Left lung (tissue), 14 donors: ENCODE measurements at regions of chr5 and their contacts with region 1.

Region 1: DNA sequence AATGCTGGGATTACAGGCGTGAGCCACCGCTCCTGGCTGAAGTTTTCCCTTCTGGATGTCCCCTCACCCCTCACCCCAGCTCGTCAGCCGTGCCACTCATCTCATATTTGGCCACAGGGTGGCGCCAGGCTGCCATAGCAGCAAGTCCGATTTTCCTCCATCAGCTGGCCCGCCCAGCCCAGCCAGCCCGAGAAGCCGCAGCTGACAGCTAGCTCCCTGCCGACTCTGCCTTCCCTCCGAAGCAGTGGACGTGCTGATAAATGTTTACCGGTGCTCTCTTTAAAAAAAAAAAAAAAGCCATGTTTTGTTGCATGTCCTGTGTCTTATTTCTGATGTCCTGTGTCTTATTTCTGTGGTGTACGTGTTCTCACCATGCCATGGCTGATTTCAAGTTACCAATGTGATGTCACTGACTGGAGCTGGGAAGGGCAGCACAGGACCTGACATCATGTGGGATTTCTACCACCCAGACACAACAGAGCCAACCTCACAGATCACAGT is 58.3 kb downstream of the PFDN1 start:
- DNase-seq: peak; percentile 60 to 97 (median 92)
- ATAC-seq: peak; percentile 79
- H3K4me3 ChIP-seq: no peak overlapping the region
- H3K27ac ChIP-seq: peak overlapping the region in 1 of 2 donors; percentile 66
- H3K4me1 ChIP-seq: peaks cover 30 to 59% of the 10 kb centered on the region in 2 donors
- H3K27me3 ChIP-seq: no peaks in the 10 kb centered on the region
- CTCF ChIP-seq: peak; percentile 83 to 85

Region 2: GRCh38 chr5:140302786-140303639 is 58.4 kb after region 1 on chr5 and contains the start of gene PFDN1:
- intact Hi-C with region 1: no loop called
- DNase-seq: peak; percentile 90 to 96 (median 94)
- ATAC-seq: peak; percentile 93
- H3K4me3 ChIP-seq: peak within 1 kb of the TSS; percentile 50 to 60
- H3K27ac ChIP-seq: peak within 1 kb of the TSS; percentile 70 to 75
- H3K4me1 ChIP-seq: peaks cover 7 to 47% of the 10 kb centered on the region in 2 donors
- H3K27me3 ChIP-seq: no peaks in the 10 kb centered on the region
- CTCF ChIP-seq: no peak
- polyA plus RNA-seq, gene PFDN1: 85.3 to 98.9 (median 91.6) TPM

Region 3: GRCh38 chr5:140346348-140347101 is 102.0 kb after region 1 on chr5 and contains the start of gene HBEGF:
- intact Hi-C with region 1: loop called (anchors 5 to 10 kb)
- DNase-seq: peak; percentile 76 to 98 (median 87)
- ATAC-seq: peak; percentile 86
- H3K4me3 ChIP-seq: peak within 1 kb of the TSS; percentile 75 to 97
- H3K27ac ChIP-seq: peak within 1 kb of the TSS; percentile 70 to 88
- H3K4me1 ChIP-seq: peaks cover 9 to 55% of the 10 kb centered on the region in 2 donors
- H3K27me3 ChIP-seq: no peaks in the 10 kb centered on the region
- CTCF ChIP-seq: peak; percentile 24 to 51
- polyA plus RNA-seq, gene HBEGF: 5.4 to 12.7 (median 7.6) TPM

Region 4: GRCh38 chr5:140351609-140352334 is 107.2 kb after region 1 on chr5:
- intact Hi-C with region 1: loop called (anchors 5 to 10 kb)
- DNase-seq: peak in 2 of 4 donors; percentile 54 to 79
- ATAC-seq: peak; percentile 76
- H3K4me3 ChIP-seq: no peak overlapping the region
- H3K27ac ChIP-seq: no peak overlapping the region
- H3K4me1 ChIP-seq: peaks cover 0 to 11% of the 10 kb centered on the region in 2 donors
- H3K27me3 ChIP-seq: no peaks in the 10 kb centered on the region
- CTCF ChIP-seq: peak; percentile 77 to 98

Region 5: DNA sequence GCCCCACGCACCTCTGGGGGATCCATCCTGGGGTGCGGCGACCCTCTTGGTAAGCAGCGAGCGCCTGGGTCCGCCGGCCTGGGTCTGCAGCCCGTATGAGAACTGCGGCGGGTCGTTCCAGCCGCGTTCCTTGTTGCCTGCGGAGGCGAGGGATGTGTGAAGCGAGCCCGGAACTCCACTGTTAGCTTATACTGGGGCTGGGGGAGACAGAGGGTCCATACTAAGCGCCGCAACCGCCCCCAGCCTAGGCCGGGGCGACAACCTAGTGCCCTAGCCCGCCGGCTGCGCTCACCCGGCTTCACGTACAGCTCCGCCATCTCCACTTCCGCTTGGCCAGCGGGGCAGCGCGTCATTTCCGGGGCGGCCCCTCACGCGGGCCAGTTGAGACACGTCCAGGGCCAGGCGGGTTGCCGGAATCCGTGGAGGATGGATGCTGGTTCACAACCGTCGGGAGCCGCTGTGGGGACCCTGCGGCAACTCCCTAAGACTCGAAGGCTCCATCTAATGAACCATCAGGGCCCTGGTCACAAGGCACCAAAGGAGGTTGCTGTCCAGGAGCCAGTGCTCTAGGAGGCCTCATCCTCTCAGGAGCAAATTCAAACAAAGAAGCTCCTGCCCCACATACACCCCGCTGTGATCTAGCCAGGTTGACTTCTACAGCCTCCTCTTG is 312.7 kb after region 1 on chr5 and contains the start of gene SRA1:
- intact Hi-C with region 1: no loop called
- DNase-seq: peak; percentile 93 to 99 (median 94)
- ATAC-seq: peak; percentile 97
- H3K4me3 ChIP-seq: peak within 1 kb of the TSS; percentile 70 to 79
- H3K27ac ChIP-seq: peak within 1 kb of the TSS; percentile 90 to 93
- H3K4me1 ChIP-seq: peaks cover 15 to 56% of the 10 kb centered on the region in 2 donors
- H3K27me3 ChIP-seq: no peaks in the 10 kb centered on the region
- CTCF ChIP-seq: no peak
- polyA plus RNA-seq, gene SRA1: 20.2 to 36.2 (median 23.1) TPM